Calu3 (cell line): ENCODE measurements at regions of chr2 and their contacts with region 1.

Region 1: DNA sequence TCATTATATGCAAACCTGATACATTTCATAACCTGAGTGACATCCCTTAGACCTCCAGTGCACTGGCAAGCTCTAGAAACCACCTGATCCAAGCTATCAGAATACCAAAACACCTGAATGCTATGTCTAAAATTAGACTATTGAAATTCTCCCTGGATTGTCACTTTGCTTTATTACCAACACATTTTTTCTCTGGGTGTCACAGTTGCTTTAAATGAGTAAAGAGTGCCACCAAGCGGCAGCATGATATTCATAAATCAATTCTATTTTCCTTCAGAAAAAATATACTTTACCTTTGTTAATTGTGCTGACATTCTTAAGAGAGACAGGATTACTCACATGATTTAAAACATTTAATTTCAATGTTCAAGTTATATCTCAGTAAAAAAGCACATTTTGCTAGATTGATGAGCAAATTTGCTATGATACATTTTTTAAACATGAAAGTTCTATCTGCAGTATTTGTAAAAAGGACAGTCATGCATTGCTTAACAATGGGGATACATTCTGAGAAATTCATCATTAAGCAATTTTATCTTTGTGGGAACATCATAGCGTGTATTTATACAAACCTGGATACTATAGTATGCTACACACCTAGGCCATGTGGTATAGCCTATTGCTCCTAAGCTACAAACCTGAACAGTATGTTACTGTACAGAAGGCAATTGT is 338.4 kb upstream of the SLC39A10 start:
- DNase-seq: peak; percentile 41
- H3K4me3 Mint-ChIP-seq: no peak overlapping the region
- H3K27ac Mint-ChIP-seq: peak overlapping the region; percentile 77
- H3K4me1 Mint-ChIP-seq: peaks cover 20% of the 10 kb centered on the region
- H3K27me3 Mint-ChIP-seq: no peaks in the 10 kb centered on the region
- CTCF ChIP-seq: peak; percentile 54

Region 2: DNA sequence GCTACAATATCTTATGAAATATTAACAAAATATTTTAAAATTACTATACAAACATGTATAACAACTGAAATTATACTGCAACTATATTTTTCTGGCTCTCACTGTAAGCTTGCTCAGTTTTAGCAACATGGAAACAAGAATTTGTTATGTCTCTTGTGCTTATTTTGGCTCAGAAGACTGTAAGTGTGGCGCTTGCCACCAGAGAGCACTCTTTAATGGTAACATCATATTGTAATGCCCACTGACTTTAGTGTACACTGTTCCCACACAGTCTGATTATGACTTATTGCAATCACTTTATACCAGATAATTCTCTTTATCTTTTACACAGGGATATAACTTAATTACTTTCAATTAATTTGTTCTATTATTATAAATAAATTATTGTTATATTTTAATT is 1623.2 kb before region 1 on chr2:
- CTCF ChIA-PET with region 1: no interaction called
- intact Hi-C with region 1: loop called (anchors 5 kb)
- DNase-seq: peak; percentile 19
- H3K4me3 Mint-ChIP-seq: no peak overlapping the region
- H3K27ac Mint-ChIP-seq: no peak overlapping the region
- H3K4me1 Mint-ChIP-seq: no peaks in the 10 kb centered on the region
- H3K27me3 Mint-ChIP-seq: no peaks in the 10 kb centered on the region
- CTCF ChIP-seq: peak; percentile 29

Region 3: GRCh38 chr2:194545978-194546377 is 772.6 kb before region 1 on chr2:
- CTCF ChIA-PET with region 1: no interaction called
- intact Hi-C with region 1: loop called (anchors 1 kb)
- DNase-seq: no peak
- H3K4me3 Mint-ChIP-seq: no peak overlapping the region
- H3K27ac Mint-ChIP-seq: no peak overlapping the region
- H3K4me1 Mint-ChIP-seq: peaks cover 21% of the 10 kb centered on the region
- H3K27me3 Mint-ChIP-seq: no peaks in the 10 kb centered on the region
- CTCF ChIP-seq: peak; percentile 32

Region 4: DNA sequence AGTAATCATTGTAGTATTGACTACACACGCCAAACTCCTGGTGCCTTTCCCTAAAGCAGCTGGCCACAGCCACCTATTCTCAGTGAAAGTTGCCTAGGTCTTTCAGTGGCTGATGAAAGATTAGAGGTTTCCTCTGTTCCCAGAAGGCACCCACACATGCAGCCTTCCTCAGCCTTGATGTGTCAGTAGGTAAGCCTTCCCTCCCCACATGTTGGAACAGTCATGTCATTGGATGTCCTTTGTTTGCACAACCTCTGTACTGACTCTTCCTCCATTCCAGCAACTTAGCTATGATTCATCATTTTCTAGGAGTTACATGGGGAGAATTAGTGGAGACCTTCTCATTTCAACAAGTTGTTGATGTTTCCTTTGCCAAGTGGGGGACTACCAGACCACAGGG is 292.3 kb before region 1 on chr2:
- CTCF ChIA-PET with region 1: no interaction called
- intact Hi-C with region 1: no loop called
- DNase-seq: peak; percentile 3
- H3K4me3 Mint-ChIP-seq: no peak overlapping the region
- H3K27ac Mint-ChIP-seq: peak overlapping the region; percentile 38
- H3K4me1 Mint-ChIP-seq: peaks cover 31% of the 10 kb centered on the region
- H3K27me3 Mint-ChIP-seq: no peaks in the 10 kb centered on the region
- CTCF ChIP-seq: no peak

Region 5: DNA sequence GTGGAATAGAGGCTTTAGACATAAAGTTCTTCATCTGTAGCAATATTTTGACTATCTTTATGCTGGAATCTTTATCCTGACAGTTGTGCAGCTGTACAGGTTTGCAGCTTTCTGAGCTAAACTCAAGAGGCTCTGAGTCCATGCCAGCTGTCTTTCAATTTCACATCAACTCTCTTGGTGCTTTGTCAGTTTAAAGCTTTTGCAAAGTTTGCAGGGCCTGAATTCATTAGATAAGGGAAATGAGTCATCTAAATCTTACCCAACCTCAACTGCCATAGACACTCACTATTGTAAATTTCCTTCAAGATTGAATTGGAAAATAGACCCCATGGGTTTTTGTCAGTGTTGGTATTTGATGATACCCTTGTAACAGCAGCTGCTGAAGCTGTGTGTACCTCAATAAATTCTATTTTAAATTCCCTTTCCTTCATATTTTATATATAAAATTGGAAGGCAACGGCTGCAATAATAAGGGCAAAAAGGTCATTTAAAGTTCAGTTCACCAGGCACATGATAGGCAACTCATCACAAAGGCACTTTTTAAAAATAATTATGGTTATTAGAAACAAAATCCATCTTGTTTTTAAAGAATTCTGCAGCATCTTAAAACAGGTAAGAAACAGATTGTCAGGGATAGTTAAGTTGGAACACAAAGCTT is 168.5 kb after region 1 on chr2:
- CTCF ChIA-PET with region 1: no interaction called
- intact Hi-C with region 1: loop called (anchors 5 kb)
- DNase-seq: peak; percentile 3
- H3K4me3 Mint-ChIP-seq: no peak overlapping the region
- H3K27ac Mint-ChIP-seq: no peak overlapping the region
- H3K4me1 Mint-ChIP-seq: peaks cover 15% of the 10 kb centered on the region
- H3K27me3 Mint-ChIP-seq: no peaks in the 10 kb centered on the region
- CTCF ChIP-seq: no peak

Region 6: GRCh38 chr2:195930082-195930481 is 611.5 kb after region 1 on chr2:
- CTCF ChIA-PET with region 1: no interaction called
- intact Hi-C with region 1: loop called (anchors 10 kb)
- DNase-seq: no peak
- H3K4me3 Mint-ChIP-seq: no peak overlapping the region
- H3K27ac Mint-ChIP-seq: no peak overlapping the region
- H3K4me1 Mint-ChIP-seq: no peaks in the 10 kb centered on the region
- H3K27me3 Mint-ChIP-seq: no peaks in the 10 kb centered on the region
- CTCF ChIP-seq: no peak